Sigmoid colon (tissue), 7 donors: ENCODE measurements at regions of chr5 and their contacts with region 1.

Region 1: DNA sequence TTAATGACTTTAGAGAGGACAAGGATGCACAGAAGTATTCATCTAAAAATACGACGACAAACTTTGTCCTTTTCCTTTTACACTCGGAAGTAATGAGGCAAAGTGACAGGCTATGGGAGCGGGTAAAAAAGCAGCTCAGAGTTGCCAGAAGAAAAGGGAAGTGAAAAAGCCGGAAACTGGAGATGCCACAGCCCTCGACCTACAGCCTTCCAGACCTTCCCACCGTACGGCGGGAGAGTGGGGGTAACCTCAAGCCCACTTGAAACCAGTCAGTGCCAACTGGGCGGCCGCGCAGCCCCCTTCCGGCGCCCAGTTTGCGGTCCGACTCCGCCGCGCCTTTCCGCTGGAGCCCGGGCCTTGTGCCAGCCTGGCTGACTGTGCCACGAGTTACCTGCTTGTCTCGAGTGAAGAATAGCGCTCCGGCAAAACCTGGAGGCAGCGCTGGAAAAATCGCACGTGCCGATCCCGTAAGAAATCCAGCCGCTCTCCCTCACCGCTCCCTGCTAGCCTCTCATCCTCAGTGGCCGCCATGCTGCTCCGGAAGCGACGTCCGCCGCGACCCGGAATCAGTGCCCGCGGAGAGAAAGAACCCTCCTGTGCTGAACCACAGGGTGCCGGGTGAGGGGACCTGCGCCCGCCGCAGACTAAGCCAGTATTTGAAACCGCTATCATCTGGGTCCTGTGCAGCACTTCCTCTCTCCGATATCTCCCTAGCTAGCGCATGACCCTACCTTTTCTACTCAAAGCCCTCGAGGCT is at the start of gene PGGT1B:
- DNase-seq: peak; percentile 85
- H3K4me3 ChIP-seq: peak within 1 kb of the TSS; percentile 71 to 80 (median 74)
- H3K27ac ChIP-seq: peak within 1 kb of the TSS; percentile 77 to 86 (median 84)
- H3K4me1 ChIP-seq: peaks cover 0 to 21% (median 20%) of the 10 kb centered on the region in 4 donors
- H3K27me3 ChIP-seq: no peaks in the 10 kb centered on the region
- CTCF ChIP-seq: no peak
- EP300 ChIP-seq: peak in 1 of 4 donors; percentile 2
- POLR2A ChIP-seq: peak; percentile 28 to 38
- total RNA-seq, gene PGGT1B: 11.4 to 18.3 (median 12.4) TPM

Region 2: DNA sequence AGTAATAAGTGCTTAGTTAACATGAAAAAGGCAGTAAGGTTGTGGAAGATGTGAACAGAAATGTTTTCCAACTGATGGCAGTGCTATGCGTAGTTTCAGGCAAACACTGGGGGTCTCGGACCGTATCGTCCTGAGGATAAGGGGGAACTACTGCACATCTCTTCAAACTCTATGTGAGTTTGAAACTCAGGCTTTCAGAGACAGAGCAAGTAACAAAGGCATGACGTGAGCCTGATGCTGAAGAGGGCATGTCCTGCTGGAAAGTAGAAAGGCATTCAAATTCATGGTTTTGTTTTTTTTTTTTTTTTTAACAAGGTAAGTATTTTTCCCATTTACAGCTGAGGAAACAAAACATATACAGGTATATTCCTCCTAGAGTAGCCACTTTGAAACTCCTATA is 152.7 kb before region 1 on chr5:
- intact Hi-C with region 1: no loop called
- DNase-seq: no peak
- H3K4me3 ChIP-seq: no peak overlapping the region
- H3K27ac ChIP-seq: no peak overlapping the region
- H3K4me1 ChIP-seq: no peaks in the 10 kb centered on the region
- H3K27me3 ChIP-seq: no peaks in the 10 kb centered on the region
- CTCF ChIP-seq: no peak
- EP300 ChIP-seq: no peak
- POLR2A ChIP-seq: no peak

Region 3: DNA sequence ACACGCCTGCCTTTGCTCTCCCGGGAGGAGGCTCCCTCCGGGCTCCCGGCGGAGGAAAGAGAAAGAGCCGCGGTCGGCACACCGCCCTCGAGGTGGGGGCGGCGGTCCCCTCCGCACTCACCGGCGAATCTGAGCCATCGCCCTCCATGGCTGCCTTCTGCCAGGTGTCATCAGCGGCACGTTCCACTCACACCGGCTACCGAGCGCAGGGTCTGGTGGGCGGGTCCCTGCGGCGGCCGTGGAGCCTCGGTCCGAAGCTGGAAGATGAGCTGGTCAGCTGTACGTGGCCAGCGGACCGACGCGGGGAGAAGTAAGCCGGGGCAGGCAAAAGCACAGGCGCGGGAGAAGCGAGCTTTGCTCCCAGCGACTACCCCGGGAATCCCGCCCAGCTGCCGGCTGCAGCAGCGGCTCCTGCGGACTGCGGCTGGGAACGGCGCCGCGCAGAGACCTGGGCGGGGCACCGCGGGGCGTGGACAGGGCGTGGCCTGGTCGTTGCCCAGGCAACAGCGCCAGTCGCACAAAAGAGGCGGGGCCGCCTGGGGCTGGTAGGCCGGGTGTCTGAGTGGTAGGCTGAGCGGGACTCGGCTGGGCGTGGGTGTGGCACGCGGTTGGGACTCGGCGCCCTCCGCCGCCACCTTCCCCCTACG is 92.9 kb before region 1 on chr5 and contains the start of gene TRIM36:
- intact Hi-C with region 1: loop called (anchors 10 kb)
- DNase-seq: peak; percentile 91
- H3K4me3 ChIP-seq: peak within 1 kb of the TSS; percentile 57 to 76 (median 70)
- H3K27ac ChIP-seq: peak within 1 kb of the TSS in 3 of 4 donors; percentile 45 to 63 (median 48)
- H3K4me1 ChIP-seq: peaks cover 0 to 27% (median 21%) of the 10 kb centered on the region in 4 donors
- H3K27me3 ChIP-seq: peaks cover 13 to 80% (median 35%) of the 10 kb centered on the region in 3 donors
- CTCF ChIP-seq: no peak
- EP300 ChIP-seq: no peak
- POLR2A ChIP-seq: peak in 1 of 2 donors; percentile 74
- total RNA-seq, gene TRIM36: 0.66 to 1.4 (median 1.1) TPM in 3 of 4 donors, not detected in the other

Region 4: GRCh38 chr5:115296124-115297022 is 33.9 kb after region 1 on chr5 and contains the start of gene CCDC112:
- intact Hi-C with region 1: loop called (anchors 2 kb)
- DNase-seq: peak; percentile 89
- H3K4me3 ChIP-seq: peak within 1 kb of the TSS; percentile 72 to 91 (median 82)
- H3K27ac ChIP-seq: peak within 1 kb of the TSS; percentile 64 to 76 (median 69)
- H3K4me1 ChIP-seq: peaks cover 0 to 12% (median 6%) of the 10 kb centered on the region in 4 donors
- H3K27me3 ChIP-seq: no peaks in the 10 kb centered on the region
- CTCF ChIP-seq: no peak
- EP300 ChIP-seq: no peak
- POLR2A ChIP-seq: peak in 1 of 2 donors; percentile 12
- total RNA-seq, gene CCDC112: 4.6 to 19.4 (median 12.6) TPM

Region 5: DNA sequence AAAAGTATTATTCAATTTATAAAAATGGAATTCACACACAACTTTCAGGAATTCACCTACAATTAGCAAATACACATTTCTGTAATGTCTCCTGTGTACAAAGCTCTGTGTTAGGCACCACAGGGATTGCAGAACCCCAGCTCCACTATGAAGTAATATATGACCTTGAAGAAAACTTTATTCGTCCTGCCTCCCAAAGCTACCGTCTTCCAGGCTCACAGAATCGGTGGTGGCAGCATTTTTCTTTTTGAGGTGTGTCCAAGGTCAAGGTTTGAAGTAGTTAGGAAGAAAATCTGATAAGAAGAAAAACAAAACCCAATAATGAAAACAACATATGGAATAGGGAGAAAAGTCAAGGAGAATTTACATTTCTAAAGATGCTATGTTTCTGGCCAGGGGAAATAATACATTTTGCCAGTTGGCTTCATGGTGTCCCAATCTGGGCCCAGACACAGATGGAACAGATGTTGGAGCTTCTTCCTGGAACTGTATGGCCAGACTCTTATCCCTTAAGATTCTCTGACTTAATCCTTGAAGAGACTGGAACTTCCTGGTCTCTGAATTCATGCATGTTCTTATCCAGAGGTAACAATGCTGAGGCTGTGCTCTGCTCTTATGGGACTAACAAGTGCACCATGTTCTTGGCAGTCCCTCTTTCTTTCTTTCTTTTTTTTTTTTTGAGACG is 677.8 kb after region 1 on chr5:
- intact Hi-C with region 1: no loop called
- DNase-seq: no peak
- H3K4me3 ChIP-seq: no peak overlapping the region
- H3K27ac ChIP-seq: no peak overlapping the region
- H3K4me1 ChIP-seq: no peaks in the 10 kb centered on the region
- H3K27me3 ChIP-seq: no peaks in the 10 kb centered on the region
- CTCF ChIP-seq: no peak
- EP300 ChIP-seq: no peak
- POLR2A ChIP-seq: no peak